GM18951 (cell line): ENCODE measurements at regions of chr6 and their contacts with region 1.

Region 1: GRCh38 chr6:17156112-17156921 is 54.5 kb downstream of the STMND1 start:
- POLR2A ChIP-seq: no peak

Region 2: GRCh38 chr6:17816921-17817611 is 660.7 kb after region 1 on chr6:
- in situ Hi-C with region 1: loop called (anchors 10 kb)
- POLR2A ChIP-seq: no peak